ENCODE measurements at regions of chr4 and their contacts with region 1.

Region 1: GRCh38 chr4:184298254-184298653 is 80.6 kb upstream of the ENPP6 start:
- DNase-seq: no peak
- ATAC-seq: peak in 3 of 8 donors; percentile 37 to 63 (median 54)
- H3K4me3 ChIP-seq: no peak overlapping the region
- H3K27ac ChIP-seq: no peak overlapping the region
- H3K4me1 ChIP-seq: peaks cover 0 to 13% (median 0%) of the 10 kb centered on the region in 9 donors
- H3K27me3 ChIP-seq: no peaks in the 10 kb centered on the region
- CTCF ChIP-seq: no peak

Region 2: GRCh38 chr4:184250795-184251669 is 47.2 kb before region 1 on chr4:
- intact Hi-C with region 1: no loop called
- DNase-seq: no peak
- ATAC-seq: peak in 2 of 8 donors; percentile 22 to 55
- H3K4me3 ChIP-seq: no peak overlapping the region
- H3K27ac ChIP-seq: no peak overlapping the region
- H3K4me1 ChIP-seq: peaks cover 0 to 10% (median 0%) of the 10 kb centered on the region in 9 donors
- H3K27me3 ChIP-seq: no peaks in the 10 kb centered on the region
- CTCF ChIP-seq: peak; percentile 34 to 69 (median 62)

Region 3: GRCh38 chr4:184329659-184330400 is 31.6 kb after region 1 on chr4:
- intact Hi-C with region 1: loop called in 1 of 10 experiments (anchors 5 kb)
- DNase-seq: no peak
- ATAC-seq: peak in 5 of 8 donors; percentile 18 to 82 (median 71)
- H3K4me3 ChIP-seq: no peak overlapping the region
- H3K27ac ChIP-seq: peak overlapping the region in 1 of 10 donors; percentile 82
- H3K4me1 ChIP-seq: peaks cover 0 to 54% (median 9%) of the 10 kb centered on the region in 9 donors
- H3K27me3 ChIP-seq: no peaks in the 10 kb centered on the region
- CTCF ChIP-seq: no peak

Region 4: DNA sequence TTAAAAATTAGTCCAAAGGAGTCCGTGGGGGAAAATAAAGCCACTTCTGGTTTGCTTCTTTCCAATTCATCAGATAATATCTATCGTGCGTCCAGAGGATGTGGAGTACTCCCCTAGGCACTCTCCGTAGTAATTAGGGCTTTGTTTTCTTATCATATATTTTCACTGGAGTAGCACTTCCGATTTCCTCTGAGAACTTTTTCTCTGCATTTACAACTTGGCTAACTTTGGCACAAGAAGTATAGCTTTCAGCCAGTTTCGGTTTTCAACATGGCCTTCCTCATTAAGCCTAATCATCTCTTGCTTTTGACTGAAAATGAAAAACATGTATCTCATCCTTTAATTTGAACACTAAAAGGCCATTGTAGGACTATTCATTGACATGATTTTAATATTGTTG is 270.5 kb after region 1 on chr4:
- intact Hi-C with region 1: no loop called
- DNase-seq: no peak
- ATAC-seq: peak in 5 of 8 donors; percentile 49 to 68 (median 67)
- H3K4me3 ChIP-seq: peak overlapping the region in 3 of 10 donors; percentile 7 to 27 (median 20)
- H3K27ac ChIP-seq: peak overlapping the region in 3 of 10 donors; percentile 13 to 42 (median 33)
- H3K4me1 ChIP-seq: peaks cover 0 to 16% (median 6%) of the 10 kb centered on the region in 9 donors
- H3K27me3 ChIP-seq: no peaks in the 10 kb centered on the region
- CTCF ChIP-seq: no peak

Measured in heart right ventricle (tissue), 16 donors.